ENCODE measurements at regions of chr3 and their contacts with region 1.

Region 1: GRCh38 chr3:10344147-10344943 is 23.4 kb upstream of the SEC13 start:
- DNase-seq: peak; percentile 36 to 73
- H3K4me3 ChIP-seq: no peak overlapping the region
- H3K4me1 ChIP-seq: no peaks in the 10 kb centered on the region
- H3K27me3 ChIP-seq: peaks cover 17% of the 10 kb centered on the region

Region 2: GRCh38 chr3:10738688-10739372 is 394.5 kb after region 1 on chr3:
- in situ Hi-C with region 1: loop called (anchors 5 kb)
- DNase-seq: peak; percentile 52 to 85
- H3K4me3 ChIP-seq: peak overlapping the region; percentile 33
- H3K4me1 ChIP-seq: no peaks in the 10 kb centered on the region
- H3K27me3 ChIP-seq: no peaks in the 10 kb centered on the region

Region 3: GRCh38 chr3:11367143-11367693 is 1022.9 kb after region 1 on chr3:
- in situ Hi-C with region 1: no loop called
- DNase-seq: peak; percentile 67 to 73
- H3K4me3 ChIP-seq: no peak overlapping the region
- H3K4me1 ChIP-seq: peaks cover 23% of the 10 kb centered on the region
- H3K27me3 ChIP-seq: no peaks in the 10 kb centered on the region